HCT116 (cell line): ENCODE measurements at regions of chr14 and their contacts with region 1.

Region 1: GRCh38 chr14:54366736-54367735 is 29.8 kb upstream of the CDKN3 start:
- DNase-seq: peak; percentile 49
- ATAC-seq: peak; percentile 98
- H3K4me3 ChIP-seq: no peak overlapping the region
- H3K27ac ChIP-seq: no peak overlapping the region
- H3K4me1 ChIP-seq: peaks cover 0 to 8% of the 10 kb centered on the region in 2 experiments; a peak in 1 of 4 replicates
- H3K27me3 ChIP-seq: no peaks in the 10 kb centered on the region
- CTCF ChIP-seq: peak; percentile 70 to 93 (median 79)
- POLR2A ChIP-seq: no peak
- RAD21 ChIP-seq: peak; percentile 86

Region 2: GRCh38 chr14:54420013-54420809 is 53.2 kb after region 1 on chr14:
- CTCF ChIA-PET with region 1: interaction called, 14 read pairs
- POLR2A ChIA-PET with region 1: no interaction called
- RAD21 ChIA-PET with region 1: interaction called, 4 to 6 read pairs
- intact Hi-C with region 1: loop called (anchors 1 kb)
- DNase-seq: peak; percentile 29
- ATAC-seq: peak; percentile 89
- H3K4me3 ChIP-seq: no peak overlapping the region
- H3K27ac ChIP-seq: no peak overlapping the region
- H3K4me1 ChIP-seq: peaks cover 0 to 5% of the 10 kb centered on the region in 2 experiments; a peak in 1 of 4 replicates
- H3K27me3 ChIP-seq: no peaks in the 10 kb centered on the region
- CTCF ChIP-seq: peak; percentile 38 to 69 (median 54); a peak in 5 of 6 replicates
- POLR2A ChIP-seq: no peak
- RAD21 ChIP-seq: peak; percentile 49

Region 3: DNA sequence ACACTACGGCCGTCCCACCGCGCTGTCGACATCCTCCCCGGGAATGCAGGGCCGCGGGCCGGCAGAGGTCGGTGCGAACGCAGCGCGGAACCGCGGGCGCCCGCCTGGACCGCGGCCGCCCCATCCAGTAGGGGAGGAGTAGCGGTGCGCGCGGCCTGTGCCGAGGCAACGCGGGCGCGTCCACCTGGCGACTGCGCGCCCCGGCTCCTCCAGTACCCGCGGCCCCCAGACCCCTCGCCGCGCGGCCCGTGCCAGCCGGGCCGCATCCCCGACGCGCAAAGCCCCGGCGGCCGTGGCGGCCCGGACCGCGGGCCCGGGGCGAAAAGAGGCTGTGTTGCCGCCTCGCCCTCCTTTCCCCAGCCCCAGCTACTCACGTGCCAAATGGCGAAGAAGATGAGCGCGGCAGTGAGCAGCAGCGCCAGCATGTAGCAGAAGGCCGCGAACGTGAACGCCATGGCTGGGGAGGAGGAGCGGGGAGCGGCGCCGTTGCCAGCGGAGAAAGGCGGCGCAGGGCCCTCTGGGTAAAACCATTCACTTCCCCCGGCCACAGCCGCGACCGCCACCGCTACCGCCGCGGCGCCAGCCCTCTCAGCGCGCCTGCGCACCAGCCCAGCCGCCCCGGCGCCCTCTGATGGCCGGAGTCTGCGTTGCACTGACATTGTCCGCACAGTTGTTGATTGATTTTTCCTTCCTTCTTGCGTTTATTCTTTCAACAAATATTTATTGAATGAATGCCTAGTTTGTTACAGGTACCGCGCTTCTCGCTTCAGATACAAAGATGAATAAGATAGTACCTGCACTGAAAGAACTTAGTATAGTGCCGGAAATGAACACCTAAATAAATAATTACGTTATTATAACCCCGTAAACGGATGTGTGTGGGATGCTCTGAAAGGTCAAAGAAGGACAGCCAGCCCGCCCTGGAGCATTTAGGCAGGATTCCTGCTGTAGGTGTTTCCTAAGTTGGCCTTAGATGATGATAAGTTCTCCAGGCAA is 74.1 kb after region 1 on chr14 and contains the start of gene CNIH1:
- CTCF ChIA-PET with region 1: no interaction called
- POLR2A ChIA-PET with region 1: interaction called, 4 read pairs
- RAD21 ChIA-PET with region 1: no interaction called
- intact Hi-C with region 1: loop called (anchors 2 kb)
- DNase-seq: peak; percentile 73
- ATAC-seq: peak; percentile 98
- H3K4me3 ChIP-seq: peak within 1 kb of the TSS; percentile 71 to 72
- H3K27ac ChIP-seq: peak within 1 kb of the TSS; percentile 97
- H3K4me1 ChIP-seq: peaks cover 13 to 28% of the 10 kb centered on the region in 2 experiments; a peak in 3 of 4 replicates
- H3K27me3 ChIP-seq: no peaks in the 10 kb centered on the region
- CTCF ChIP-seq: peak; percentile 55 to 90 (median 85); a peak in 5 of 6 replicates
- POLR2A ChIP-seq: peak; percentile 77
- RAD21 ChIP-seq: peak; percentile 30; the same call in 1 of the 2 replicates
- total RNA-seq, gene CNIH1: 149 TPM

Region 4: DNA sequence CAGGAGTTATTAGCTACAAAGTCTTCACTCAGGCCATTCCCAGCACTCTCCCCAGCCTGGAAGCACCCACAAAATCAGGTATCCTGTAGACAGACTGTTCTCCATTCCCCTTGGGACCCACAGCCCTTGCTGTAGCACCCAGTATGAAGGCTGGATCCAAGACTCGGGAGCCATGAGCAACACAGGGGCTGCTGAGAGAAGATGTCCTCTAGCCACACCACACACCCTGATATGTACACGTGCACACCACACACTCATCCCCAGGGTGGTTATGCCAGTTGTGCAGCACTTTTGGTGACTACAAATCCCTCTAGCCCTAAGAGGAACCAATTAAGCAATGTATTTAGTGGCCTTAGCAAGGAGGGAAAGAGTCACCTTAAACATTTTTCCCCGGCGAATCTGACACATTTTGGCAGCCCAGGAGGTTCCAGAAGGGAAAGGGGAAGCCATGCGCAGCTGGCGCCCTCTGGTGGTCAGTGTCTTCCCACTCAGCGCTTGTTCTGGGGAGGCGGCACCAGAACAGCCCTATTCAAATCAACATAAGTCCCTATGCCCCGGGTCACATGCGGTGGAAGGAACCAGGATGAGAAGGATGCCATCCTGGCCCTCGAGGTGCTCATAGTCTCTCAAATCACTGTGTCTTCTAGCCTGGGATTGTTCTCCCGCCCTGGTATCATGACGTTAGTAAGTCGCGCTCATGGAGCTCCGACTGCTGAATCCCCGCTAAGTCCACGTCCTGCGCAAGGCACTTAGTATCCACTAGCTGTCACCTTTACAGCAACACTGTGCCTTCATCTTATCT is 438.7 kb after region 1 on chr14:
- CTCF ChIA-PET with region 1: interaction called, 17 read pairs
- POLR2A ChIA-PET with region 1: no interaction called
- RAD21 ChIA-PET with region 1: no interaction called
- intact Hi-C with region 1: loop called (anchors 2 kb)
- DNase-seq: peak; percentile 68
- ATAC-seq: peak; percentile 98
- H3K4me3 ChIP-seq: no peak overlapping the region
- H3K27ac ChIP-seq: no peak overlapping the region
- H3K4me1 ChIP-seq: peaks cover 0 to 5% of the 10 kb centered on the region in 2 experiments; a peak in 1 of 4 replicates
- H3K27me3 ChIP-seq: no peaks in the 10 kb centered on the region
- CTCF ChIP-seq: peak; percentile 89 to 96 (median 89)
- POLR2A ChIP-seq: no peak
- RAD21 ChIP-seq: peak; percentile 91